ENCODE measurements at regions of chr17 and their contacts with region 1.

Region 1: DNA sequence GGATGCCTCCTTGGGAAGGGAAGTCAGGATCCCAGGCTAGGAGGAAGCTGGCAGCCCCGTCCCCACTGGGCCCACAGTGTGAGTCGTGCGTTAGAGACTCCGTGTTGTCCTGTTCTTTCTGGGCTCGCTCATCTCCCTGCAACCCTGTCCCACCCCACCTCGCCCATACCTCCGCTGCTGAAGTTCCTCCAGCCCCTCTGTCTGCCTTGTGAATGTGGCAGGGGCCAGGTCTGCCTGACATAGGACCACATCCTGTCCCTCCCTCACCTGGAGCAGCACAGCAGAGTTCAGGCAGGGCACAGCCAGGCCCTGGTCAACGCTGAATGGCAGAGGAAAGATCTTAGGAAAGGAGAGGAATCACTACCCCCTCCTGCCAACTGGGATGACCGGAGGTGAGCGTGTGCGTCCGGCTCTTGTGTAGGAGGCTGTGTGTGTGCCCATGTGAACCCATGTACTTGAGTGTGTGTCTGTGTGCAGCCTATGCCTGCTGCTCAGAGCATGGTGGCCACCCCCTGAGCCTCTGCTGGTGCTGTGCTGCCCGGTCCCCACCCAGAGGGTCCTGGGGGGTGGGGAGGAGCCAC is 12.8 kb downstream of the KCNJ18 start:
- DNase-seq: no peak

Region 2: DNA sequence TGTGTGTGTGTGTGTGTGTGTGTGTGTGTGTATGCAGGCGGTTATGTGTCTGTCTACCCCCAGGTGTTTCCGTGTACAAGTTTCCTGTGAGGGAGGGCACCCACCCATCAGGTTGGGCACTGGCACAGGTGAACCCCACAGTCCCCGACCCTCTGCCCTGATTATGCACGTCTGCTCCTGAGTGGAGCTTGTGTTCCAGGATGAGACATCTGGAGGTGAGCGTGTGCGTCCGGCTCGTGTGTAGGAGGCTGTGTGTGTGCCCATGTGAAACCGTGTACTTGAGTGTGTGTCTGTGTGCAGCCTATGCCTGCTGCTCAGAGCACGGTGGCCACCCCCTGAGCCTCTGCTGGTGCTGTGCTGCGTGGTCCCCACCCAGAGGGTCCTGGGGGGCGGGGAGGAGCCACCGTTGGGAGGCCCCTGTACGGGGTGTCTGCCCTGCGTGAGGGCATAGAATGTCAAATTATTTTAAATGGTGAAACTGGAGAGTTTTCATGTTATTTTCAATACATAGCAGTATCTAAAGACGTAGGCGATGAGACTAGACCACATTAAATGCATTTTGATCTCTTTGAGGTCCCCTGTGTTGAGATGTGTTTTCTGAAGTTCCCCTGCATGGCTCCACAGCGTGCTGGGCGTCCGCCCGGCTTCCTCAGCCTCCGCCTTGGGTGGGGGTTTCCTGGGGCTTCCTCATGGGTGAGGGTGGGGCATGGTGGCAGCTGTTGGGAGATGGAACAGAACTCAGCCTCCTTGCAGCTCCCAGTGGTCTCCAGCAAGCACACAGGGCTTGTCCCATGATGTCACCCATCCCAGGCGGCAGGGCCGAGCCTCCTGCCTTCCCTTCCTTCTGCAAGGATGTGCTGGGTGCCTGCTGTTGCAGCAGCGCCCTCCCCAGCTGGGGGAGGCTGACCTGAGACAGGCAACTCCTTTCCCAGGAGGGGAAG is 285.5 kb before region 1 on chr17:
- in situ Hi-C with region 1: loop called (anchors 5 kb)
- DNase-seq: no peak

Region 3: GRCh38 chr17:21551081-21551881 is 153.8 kb before region 1 on chr17:
- in situ Hi-C with region 1: no loop called
- DNase-seq: peak; percentile 79

Region 4: GRCh38 chr17:21573961-21574610 is 131.0 kb before region 1 on chr17:
- in situ Hi-C with region 1: no loop called
- DNase-seq: no peak

Measured in KBM-7 (cell line).